ENCODE measurements at regions of chr2 and their contacts with region 1.

Region 1: DNA sequence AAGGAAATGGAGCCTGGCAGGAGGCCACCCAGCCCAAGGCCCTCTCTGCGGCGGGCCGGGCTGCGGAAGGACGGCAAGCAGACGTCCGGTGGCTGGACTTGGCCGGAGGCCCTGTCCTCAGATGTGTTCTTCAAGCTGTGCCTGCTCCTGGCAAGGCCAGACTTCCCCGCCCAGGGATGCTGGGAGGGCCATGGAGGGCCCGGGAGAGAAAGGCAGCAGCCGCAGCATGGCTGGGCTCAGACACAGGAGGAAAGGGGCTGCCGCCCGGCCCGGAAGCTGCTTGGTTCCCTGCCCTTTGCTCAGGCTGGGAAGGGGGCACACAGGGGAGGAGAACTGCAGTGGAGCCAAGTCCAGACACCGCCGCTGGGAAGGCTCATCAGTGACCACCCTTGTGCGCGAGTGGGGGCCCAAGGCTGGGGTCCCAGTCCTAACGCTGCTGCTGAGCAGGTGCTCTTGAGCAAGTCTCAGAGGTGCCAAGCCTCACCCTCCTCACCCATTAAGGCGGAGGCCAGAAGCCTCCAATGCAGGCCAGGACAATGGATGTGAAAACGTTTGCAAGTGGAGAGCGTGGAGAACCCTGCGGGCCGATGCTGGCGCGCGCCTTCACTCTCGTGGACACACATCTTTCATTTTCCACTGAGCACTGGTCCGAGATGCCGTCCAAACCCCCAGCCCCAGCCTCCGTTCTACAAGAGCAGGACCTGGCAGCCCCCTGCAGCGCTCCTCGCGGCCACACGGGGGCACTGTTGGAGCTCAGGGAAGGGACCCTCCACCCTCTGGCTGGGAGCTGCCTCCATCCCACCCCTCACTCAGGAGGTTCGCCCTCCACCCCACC is 7.9 kb downstream of the CROCC2 start:
- DNase-seq: peak; percentile 71 to 82
- ATAC-seq: peak; percentile 66 to 90 (median 82)
- H3K4me3 ChIP-seq: no peak overlapping the region
- H3K27ac ChIP-seq: peak overlapping the region in 8 of 10 donors; percentile 29 to 76 (median 56)
- H3K4me1 ChIP-seq: peaks cover 20 to 44% (median 34%) of the 10 kb centered on the region in 9 donors
- H3K27me3 ChIP-seq: peaks cover 0 to 53% (median 24%) of the 10 kb centered on the region in 7 donors
- CTCF ChIP-seq: peak; percentile 78 to 96 (median 91)

Region 2: GRCh38 chr2:240991373-240992263 is 77.6 kb after region 1 on chr2:
- intact Hi-C with region 1: loop called in 4 of 10 experiments (anchors 5 to 10 kb)
- DNase-seq: peak; percentile 79 to 83
- ATAC-seq: peak; percentile 61 to 89 (median 80)
- H3K4me3 ChIP-seq: peak overlapping the region in 2 of 10 donors; percentile 5 to 18
- H3K27ac ChIP-seq: peak overlapping the region; percentile 35 to 72 (median 64)
- H3K4me1 ChIP-seq: peaks cover 20 to 61% (median 31%) of the 10 kb centered on the region in 9 donors
- H3K27me3 ChIP-seq: no peaks in the 10 kb centered on the region
- CTCF ChIP-seq: no peak

Region 3: DNA sequence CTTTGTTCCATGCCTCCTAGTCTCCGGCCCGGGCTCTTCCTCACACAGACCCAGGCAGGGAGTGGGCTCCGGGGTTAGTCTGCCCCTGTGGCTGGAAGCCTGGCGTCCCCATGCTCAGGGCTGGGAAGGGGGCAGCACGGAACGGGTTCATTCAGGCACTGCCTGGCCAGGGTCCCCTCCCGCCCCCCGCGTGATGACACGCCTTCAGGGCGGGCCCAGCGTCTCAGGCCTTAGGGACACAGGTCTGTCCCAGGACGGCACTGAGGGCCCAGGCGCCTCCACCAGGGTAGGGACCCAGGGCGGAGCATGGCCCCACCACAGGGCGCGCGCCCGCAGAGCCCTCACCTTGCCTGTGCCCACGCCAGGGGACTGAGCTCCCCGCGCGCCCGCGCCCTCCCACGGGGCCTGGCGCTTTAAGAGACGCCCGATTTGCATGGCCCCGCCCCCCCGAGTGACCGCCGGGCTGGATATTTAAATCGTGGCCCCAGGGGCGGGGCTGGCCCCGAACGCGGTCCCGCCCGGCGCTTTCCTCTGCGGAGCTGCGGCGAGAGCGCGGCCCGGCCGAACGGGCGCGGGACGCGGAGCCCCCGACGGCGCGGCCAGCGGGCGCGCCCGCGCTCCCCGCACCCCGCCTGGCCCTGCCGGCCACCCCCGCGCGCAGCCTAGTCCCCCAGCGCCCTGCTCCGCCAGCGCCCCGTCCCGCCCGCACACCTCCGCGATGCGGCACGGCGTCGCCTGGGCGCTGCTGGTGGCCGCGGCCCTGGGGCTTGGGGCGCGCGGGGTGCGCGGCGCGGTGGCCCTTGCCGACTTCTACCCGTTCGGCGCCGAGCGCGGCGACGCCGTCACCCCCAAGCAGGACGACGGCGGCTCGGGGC is 84.3 kb after region 1 on chr2 and contains the start of gene SNED1:
- intact Hi-C with region 1: loop called in 3 of 10 experiments (anchors 5 to 10 kb)
- DNase-seq: peak; percentile 90
- ATAC-seq: peak; percentile 85 to 93 (median 90)
- H3K4me3 ChIP-seq: peak within 1 kb of the TSS; percentile 25 to 88 (median 66)
- H3K27ac ChIP-seq: peak within 1 kb of the TSS; percentile 66 to 89 (median 81)
- H3K4me1 ChIP-seq: peaks cover 11 to 54% (median 28%) of the 10 kb centered on the region in 9 donors
- H3K27me3 ChIP-seq: peaks cover 0 to 14% (median 0%) of the 10 kb centered on the region in 7 donors
- CTCF ChIP-seq: no peak
- total RNA-seq, gene SNED1: 3.9 to 12.7 (median 6.3) TPM

Region 4: DNA sequence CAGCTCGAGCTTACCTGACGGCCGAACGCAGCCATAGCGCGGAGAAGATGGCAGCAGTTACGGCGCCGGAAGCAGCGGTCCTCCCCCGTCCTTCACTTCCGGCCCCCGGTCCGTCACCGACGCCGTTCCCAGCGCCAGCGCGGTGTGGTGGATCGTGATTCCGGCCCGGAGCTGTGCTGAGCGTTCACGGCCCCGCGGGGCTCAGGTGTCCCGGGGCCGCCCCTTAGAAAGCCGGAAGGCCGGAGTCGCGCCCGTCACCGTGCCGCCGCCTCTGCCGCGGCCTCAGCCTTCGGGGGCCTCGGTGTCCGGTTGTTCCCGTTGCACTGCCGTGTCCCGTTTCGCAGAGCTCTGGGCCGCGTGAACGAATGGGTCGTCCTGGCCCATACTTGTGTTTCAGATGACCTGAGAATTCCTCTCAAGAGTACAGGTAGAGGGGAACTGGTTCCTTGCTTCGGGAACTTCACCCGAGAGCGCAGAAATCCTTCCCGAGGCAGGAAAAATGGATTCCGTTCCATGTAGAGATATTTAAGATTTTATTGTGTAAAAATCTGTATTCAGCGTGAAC is 188.3 kb after region 1 on chr2 and contains the start of gene MTERF4:
- intact Hi-C with region 1: loop called in 1 of 10 experiments (anchors 5 kb)
- DNase-seq: peak; percentile 85 to 88
- ATAC-seq: peak; percentile 98 to 99 (median 99)
- H3K4me3 ChIP-seq: peak within 1 kb of the TSS; percentile 68 to 99 (median 92)
- H3K27ac ChIP-seq: peak within 1 kb of the TSS; percentile 19 to 94 (median 88)
- H3K4me1 ChIP-seq: peaks cover 6 to 28% (median 21%) of the 10 kb centered on the region in 9 donors
- H3K27me3 ChIP-seq: no peaks in the 10 kb centered on the region
- CTCF ChIP-seq: no peak
- total RNA-seq, gene MTERF4: 18.9 to 27.1 (median 23.2) TPM

Region 5: GRCh38 chr2:241358470-241358869 is 444.4 kb after region 1 on chr2:
- intact Hi-C with region 1: no loop called
- DNase-seq: no peak
- ATAC-seq: no peak
- H3K4me3 ChIP-seq: peak overlapping the region in 1 of 10 donors; percentile 9
- H3K27ac ChIP-seq: peak overlapping the region in 1 of 10 donors; percentile 67
- H3K4me1 ChIP-seq: peaks cover 2 to 42% (median 20%) of the 10 kb centered on the region in 9 donors
- H3K27me3 ChIP-seq: no peaks in the 10 kb centered on the region
- CTCF ChIP-seq: no peak

Region 6: DNA sequence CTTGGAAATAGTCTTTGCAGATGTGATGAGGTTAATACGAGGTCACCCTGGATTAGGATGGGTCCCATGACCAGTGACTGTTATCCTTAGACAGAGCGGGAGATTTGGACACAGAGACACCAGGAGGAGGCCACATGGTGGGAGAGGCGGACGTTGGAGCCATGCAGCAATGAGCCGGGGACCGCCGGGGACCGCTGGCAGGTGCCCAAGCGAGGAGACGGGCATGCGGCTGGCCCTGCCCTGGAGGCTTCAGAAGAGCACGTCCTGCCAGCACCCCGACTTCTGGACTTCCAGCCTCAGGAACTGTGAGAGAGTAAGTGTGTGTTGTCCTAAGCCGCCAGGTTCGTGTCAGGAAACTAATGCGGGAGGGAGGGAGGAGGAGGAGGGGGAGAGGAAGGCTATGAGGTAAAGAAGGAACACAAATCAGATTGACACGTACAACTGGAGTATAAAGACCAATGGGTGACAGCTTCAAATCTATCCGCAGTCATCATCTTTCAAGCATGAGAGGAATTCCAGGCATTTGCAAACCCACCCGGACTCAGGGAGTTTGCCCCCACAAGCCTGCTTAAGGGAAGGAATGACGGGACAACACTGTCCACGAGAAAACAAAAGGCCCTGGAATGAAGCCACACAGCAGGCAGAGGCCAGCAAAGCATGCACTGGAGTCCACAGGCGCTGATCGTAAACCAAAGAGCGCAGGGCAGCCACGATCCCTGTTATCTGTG is 632.9 kb after region 1 on chr2:
- intact Hi-C with region 1: loop called in 1 of 10 experiments (anchors 5 kb)
- DNase-seq: no peak
- ATAC-seq: peak in 3 of 8 donors; percentile 19 to 40 (median 22)
- H3K4me3 ChIP-seq: no peak overlapping the region
- H3K27ac ChIP-seq: no peak overlapping the region
- H3K4me1 ChIP-seq: peaks cover 4 to 28% (median 16%) of the 10 kb centered on the region in 9 donors
- H3K27me3 ChIP-seq: peaks cover 0 to 52% (median 8%) of the 10 kb centered on the region in 7 donors
- CTCF ChIP-seq: no peak